Heart right ventricle (tissue), 16 donors: ENCODE measurements at regions of chrX and their contacts with region 1.

Region 1: GRCh38 chrX:41275661-41276609 is 58.0 kb upstream of the DDX3X start:
- DNase-seq: peak; percentile 64 to 66
- ATAC-seq: peak; percentile 77 to 95 (median 92)
- H3K4me3 ChIP-seq: peak overlapping the region; percentile 38 to 68 (median 56)
- H3K27ac ChIP-seq: peak overlapping the region in 6 of 10 donors; percentile 2 to 60 (median 49)
- H3K4me1 ChIP-seq: peaks cover 0 to 19% (median 0%) of the 10 kb centered on the region in 9 donors
- H3K27me3 ChIP-seq: peaks cover 0 to 49% (median 0%) of the 10 kb centered on the region in 7 donors
- CTCF ChIP-seq: peak; percentile 11 to 64 (median 53)

Region 2: DNA sequence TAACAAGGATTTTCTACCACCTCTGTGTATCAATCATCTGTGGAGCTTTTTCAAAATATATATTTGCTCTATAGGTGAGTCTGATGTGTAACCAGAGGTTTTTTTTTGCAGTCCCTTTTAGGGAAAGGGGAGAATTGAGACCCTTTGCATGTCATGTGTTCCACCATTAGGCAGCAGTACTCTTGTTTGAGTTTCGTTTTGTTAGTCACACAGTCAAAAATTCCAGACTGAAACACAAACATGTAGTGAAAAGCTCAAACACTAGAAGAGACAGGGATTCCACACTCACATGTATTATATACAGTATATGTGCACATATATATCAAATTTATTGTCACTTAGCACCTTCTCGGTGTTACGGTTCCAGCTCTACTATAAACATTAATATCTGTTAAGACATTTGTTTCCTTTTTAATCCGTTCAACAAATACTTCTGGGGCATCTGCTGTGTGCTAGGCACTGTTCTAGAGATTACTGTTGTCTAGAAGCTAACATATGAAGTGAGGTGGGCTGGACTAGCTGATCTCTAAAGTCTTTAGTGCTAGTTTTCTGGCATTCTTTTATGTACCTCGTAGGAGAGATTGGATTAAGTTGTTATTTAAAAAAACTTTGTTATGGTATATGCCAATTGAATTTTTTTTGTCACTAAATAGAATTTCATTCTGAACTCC is 185.2 kb before region 1 on chrX:
- intact Hi-C with region 1: no loop called
- DNase-seq: no peak
- ATAC-seq: no peak
- H3K4me3 ChIP-seq: no peak overlapping the region
- H3K27ac ChIP-seq: no peak overlapping the region
- H3K4me1 ChIP-seq: peaks cover 0 to 79% (median 36%) of the 10 kb centered on the region in 9 donors
- H3K27me3 ChIP-seq: peaks cover 0 to 75% (median 0%) of the 10 kb centered on the region in 7 donors
- CTCF ChIP-seq: no peak

Region 3: DNA sequence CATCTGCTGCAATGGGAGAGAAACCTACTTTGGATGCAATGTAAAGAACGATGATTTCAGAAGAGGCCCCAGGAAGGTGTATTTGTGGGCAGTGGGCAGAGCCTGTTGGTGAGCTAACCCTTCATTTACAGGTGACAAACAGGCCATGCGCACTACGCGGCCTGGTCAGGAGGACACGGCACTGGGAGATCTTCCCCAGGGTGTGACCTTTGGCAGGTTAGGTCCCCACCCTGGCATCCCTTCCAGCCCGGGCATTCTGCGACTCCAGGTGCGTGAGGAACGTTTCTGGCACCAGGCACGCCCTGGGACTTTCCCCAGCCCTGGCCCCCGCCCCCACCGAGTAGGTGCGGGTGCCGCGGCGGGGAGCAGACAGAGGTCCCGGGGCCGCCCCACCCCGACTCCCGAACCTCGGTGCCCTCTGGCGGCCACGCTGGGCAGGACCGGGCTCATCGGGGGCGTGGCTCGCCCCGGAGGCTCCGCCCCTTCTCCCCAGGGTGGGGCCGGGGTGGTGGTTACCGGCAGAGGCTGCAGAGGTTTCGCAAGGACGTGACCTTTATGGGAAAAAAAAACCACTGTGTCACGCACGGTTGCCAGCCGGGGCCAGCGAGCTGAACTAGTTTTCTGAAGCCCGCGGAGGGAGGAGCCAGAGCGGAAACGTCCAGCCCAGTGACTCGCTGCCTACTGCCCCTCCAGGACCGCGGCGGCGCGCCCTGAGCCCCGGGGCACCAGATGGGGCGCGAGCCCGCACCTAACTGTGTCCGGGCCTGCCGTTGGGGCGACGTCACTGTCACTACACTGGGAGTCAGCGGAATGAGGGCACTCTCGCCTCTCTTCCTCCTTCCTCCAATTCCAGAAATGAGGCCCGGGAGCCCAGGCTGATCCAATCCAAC is 166.2 kb after region 1 on chrX:
- intact Hi-C with region 1: loop called in 3 of 10 experiments (anchors 2 to 10 kb)
- DNase-seq: peak; percentile 79 to 83
- ATAC-seq: peak; percentile 93 to 97 (median 96)
- H3K4me3 ChIP-seq: peak overlapping the region in 8 of 10 donors; percentile 26 to 58 (median 44)
- H3K27ac ChIP-seq: peak overlapping the region; percentile 17 to 90 (median 76)
- H3K4me1 ChIP-seq: peaks cover 0 to 7% (median 3%) of the 10 kb centered on the region in 9 donors
- H3K27me3 ChIP-seq: peaks cover 0 to 9% (median 0%) of the 10 kb centered on the region in 7 donors
- CTCF ChIP-seq: peak; percentile 22 to 76 (median 61)